Esophagus squamous epithelium (tissue), 5 donors: ENCODE measurements at regions of chr15 and their contacts with region 1.

Region 1: DNA sequence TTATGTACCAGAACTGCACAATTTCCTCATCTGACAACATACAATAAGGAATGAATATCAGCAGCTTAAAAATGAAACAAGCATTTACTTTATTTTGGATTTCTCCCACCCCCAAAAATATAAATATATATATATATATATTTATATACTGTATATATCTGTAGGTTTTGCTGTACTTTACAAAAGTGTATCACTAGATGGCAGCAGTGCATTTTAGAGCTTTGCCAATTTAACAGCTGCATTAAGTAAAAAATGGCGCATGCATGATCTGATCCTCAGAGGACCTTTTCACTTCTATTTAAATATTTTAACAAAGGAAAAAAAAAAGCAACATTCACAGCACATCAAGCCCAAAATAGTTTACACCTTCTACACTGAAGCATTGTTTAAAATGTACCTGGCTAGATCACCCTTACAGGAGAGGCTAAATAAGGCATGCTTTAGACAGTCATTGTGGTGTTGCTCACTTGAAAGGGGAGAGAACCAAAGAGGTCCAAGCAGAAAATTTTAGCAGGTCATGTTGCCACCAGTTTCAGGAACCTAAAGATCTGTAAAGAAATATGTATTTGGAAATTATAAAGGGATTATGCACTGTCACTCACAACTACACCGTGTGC is 72.6 kb downstream of the NPTN start:
- DNase-seq: no peak
- H3K4me3 ChIP-seq: no peak overlapping the region
- H3K27ac ChIP-seq: no peak overlapping the region
- H3K4me1 ChIP-seq: peaks cover 0 to 15% (median 0%) of the 10 kb centered on the region in 3 donors
- H3K27me3 ChIP-seq: no peaks in the 10 kb centered on the region
- CTCF ChIP-seq: peak in 5 of 6 experiments; percentile 13 to 52 (median 21)
- POLR2A ChIP-seq: no peak

Region 2: DNA sequence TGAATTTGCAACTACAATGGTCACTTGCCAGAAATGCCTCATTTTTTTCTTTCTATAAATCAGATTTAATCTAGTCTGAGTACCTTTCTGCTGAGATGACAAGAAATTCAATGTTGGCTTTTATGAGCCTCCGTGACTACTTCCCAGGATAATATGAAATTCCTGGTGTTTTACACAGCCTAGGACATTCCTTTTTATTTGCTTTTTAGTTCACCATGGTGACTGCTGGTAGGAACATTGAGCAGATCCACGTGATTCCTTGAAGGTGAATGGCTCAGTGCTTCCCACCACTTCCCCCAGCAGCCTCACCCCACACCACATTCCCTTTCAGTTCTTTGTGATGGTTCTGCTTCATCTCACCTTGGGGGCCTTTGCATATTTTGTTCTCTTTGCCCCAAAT is 76.9 kb after region 1 on chr15:
- intact Hi-C with region 1: loop called (anchors 5 kb)
- DNase-seq: no peak
- H3K4me3 ChIP-seq: no peak overlapping the region
- H3K27ac ChIP-seq: no peak overlapping the region
- H3K4me1 ChIP-seq: peaks cover 10 to 22% (median 12%) of the 10 kb centered on the region in 3 donors
- H3K27me3 ChIP-seq: peaks cover 0 to 33% (median 0%) of the 10 kb centered on the region in 4 donors
- CTCF ChIP-seq: no peak
- POLR2A ChIP-seq: no peak